Heart right ventricle (tissue), 16 donors: ENCODE measurements at regions of chr2 and their contacts with region 1.

Region 1: GRCh38 chr2:224778474-224778877 is 62.3 kb upstream of the CCDC195 start:
- DNase-seq: peak in 1 of 2 donors; percentile 21
- ATAC-seq: peak in 1 of 8 donors; percentile 49
- H3K4me3 ChIP-seq: no peak overlapping the region
- H3K27ac ChIP-seq: no peak overlapping the region
- H3K4me1 ChIP-seq: no peaks in the 10 kb centered on the region
- H3K27me3 ChIP-seq: no peaks in the 10 kb centered on the region
- CTCF ChIP-seq: peak; percentile 62 to 87 (median 79)

Region 2: GRCh38 chr2:224650815-224651439 is 127.5 kb before region 1 on chr2:
- intact Hi-C with region 1: loop called in 3 of 10 experiments (anchors 5 to 10 kb)
- DNase-seq: peak in 1 of 2 donors; percentile 10
- ATAC-seq: peak in 6 of 8 donors; percentile 50 to 70 (median 60)
- H3K4me3 ChIP-seq: no peak overlapping the region
- H3K27ac ChIP-seq: no peak overlapping the region
- H3K4me1 ChIP-seq: no peaks in the 10 kb centered on the region
- H3K27me3 ChIP-seq: peaks cover 0 to 5% (median 0%) of the 10 kb centered on the region in 7 donors
- CTCF ChIP-seq: peak; percentile 52 to 88 (median 81)

Region 3: GRCh38 chr2:224885836-224886547 is 107.5 kb after region 1 on chr2:
- intact Hi-C with region 1: no loop called
- DNase-seq: no peak
- ATAC-seq: no peak
- H3K4me3 ChIP-seq: no peak overlapping the region
- H3K27ac ChIP-seq: peak overlapping the region in 1 of 10 donors; percentile 51
- H3K4me1 ChIP-seq: peaks cover 0 to 58% (median 0%) of the 10 kb centered on the region in 9 donors
- H3K27me3 ChIP-seq: no peaks in the 10 kb centered on the region
- CTCF ChIP-seq: no peak

Region 4: DNA sequence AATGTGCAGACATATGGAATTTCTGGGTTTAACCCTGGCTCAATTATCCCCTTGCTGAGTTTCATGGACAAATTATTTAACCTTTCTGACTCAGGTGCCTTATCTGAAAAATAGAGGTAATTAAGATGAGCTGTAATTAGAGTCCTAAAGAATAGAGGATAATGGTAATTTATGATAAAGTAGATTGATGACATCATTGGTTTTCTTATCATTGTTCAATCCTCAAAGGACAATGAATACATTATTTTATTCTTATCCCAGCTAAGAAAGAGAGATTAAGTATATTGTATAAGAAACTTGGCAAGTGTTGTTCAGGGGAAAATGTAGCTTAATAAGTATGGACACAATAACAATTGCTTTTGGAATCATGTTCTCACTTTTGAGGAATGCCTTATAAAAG is 900.3 kb after region 1 on chr2:
- intact Hi-C with region 1: loop called in 1 of 10 experiments (anchors 5 kb)
- DNase-seq: no peak
- ATAC-seq: no peak
- H3K4me3 ChIP-seq: no peak overlapping the region
- H3K27ac ChIP-seq: no peak overlapping the region
- H3K4me1 ChIP-seq: no peaks in the 10 kb centered on the region
- H3K27me3 ChIP-seq: peaks cover 0 to 6% (median 0%) of the 10 kb centered on the region in 7 donors
- CTCF ChIP-seq: no peak